Sciatic nerve (tissue), 2 donors: ENCODE measurements at regions of chr1 and their contacts with region 1.

Region 1: DNA sequence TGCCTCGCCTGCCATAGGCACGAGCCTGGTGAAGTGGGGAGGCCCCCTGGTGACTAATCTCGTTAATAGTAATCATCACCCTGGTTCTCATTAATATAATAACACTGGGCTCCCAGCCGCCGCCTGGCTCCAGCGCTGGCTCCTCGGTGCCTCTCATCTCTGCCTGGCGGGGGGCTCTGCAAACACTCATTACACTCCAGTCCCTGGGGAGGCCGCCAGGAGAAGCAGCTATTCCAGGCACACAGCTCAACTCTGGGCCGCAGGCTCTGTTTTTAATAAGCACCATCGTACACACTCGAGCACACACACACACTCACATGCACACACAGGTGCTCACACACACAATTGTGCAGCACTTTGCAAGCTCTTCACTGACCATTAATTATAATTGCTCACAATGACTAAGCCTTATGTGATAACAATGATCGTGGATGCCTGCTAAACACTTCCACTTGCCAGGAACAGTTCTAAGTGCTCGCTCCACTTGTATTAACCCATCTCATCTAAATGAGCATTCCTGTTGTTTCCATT is 52.2 kb downstream of the SDC3 start:
- DNase-seq: no peak
- ATAC-seq: no peak

Region 2: DNA sequence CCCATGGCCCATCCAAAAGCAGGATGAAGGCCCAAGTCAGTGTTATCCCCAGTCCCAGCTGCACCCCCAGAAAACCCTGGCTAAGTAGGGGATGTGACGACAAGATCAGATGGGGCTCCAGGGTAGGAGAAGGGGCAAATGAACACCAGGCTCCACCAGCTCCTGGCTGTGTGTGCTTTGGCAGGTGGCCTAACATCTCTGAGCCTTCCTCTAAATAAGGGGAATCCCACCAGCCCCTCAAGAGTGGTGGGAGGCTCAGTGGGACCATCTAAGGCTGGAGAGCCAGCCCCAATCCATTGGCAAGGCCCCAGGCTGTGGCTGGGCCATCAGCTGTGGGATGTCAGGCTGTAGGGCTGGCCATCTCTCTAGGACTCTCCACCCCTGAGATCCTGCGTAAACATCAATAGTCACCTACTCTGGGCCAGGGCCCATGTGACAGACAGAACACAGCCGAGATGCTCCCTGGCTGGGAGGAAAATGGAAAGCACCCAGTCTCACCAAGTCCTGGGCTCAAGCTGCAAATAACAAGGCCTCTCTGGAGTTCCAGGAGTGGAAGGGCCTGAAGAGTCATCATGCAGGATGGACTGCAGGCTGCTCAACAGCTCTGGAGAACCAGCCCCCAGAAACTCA is 44.7 kb after region 1 on chr1:
- intact Hi-C with region 1: loop called (anchors 1 kb)
- DNase-seq: no peak
- ATAC-seq: no peak